ENCODE measurements at regions of chr4 and their contacts with region 1.

Region 1: DNA sequence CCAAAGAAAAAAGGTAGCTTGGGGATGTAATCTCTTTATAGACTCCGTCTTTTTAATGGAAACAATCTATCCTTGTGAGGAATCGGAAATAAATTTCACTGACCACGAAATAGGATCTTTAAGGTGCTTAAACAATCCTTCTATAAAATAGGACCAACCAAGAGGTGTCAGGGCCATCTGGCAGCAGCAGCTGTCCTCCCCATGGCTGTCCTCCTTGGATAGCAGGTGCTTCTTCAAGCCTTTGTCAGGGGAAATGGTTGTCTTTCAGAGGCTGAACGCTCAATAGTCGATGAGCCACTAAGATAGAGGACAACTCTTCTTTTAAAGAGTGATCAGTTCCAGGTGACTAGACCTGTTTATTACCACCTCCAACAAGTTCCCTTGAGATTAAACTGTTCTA is 231.0 kb downstream of the ADGRL3 start:
- DNase-seq: no peak
- H3K4me3 ChIP-seq: no peak overlapping the region
- H3K27ac ChIP-seq: no peak overlapping the region
- H3K4me1 ChIP-seq: no peaks in the 10 kb centered on the region
- H3K27me3 ChIP-seq: no peaks in the 10 kb centered on the region
- CTCF ChIP-seq: no peak
- POLR2A ChIP-seq: no peak

Region 2: DNA sequence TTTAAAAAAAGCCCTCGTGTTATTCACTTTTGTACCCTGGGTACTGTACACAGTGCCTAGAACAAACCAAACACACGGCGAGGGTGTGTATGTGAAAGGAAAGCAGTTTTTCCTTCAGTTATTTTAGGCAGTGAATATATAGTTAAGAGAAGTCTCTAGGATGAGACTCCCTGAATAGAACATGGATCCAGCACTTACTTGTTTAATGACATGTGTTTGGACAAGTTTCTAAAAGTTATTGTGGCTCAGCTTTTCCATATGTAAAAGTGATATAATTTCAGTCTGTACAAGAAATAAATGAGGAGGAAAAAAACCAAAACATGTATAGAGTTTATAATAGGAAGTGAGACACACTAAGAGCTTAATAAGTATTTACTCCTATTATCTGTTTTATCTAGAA is 42.2 kb after region 1 on chr4:
- intact Hi-C with region 1: loop called (anchors 5 kb)
- DNase-seq: no peak
- H3K4me3 ChIP-seq: no peak overlapping the region
- H3K27ac ChIP-seq: no peak overlapping the region
- H3K4me1 ChIP-seq: no peaks in the 10 kb centered on the region
- H3K27me3 ChIP-seq: no peaks in the 10 kb centered on the region
- CTCF ChIP-seq: no peak
- POLR2A ChIP-seq: no peak